ENCODE measurements at regions of chr14 and their contacts with region 1.

Region 1: DNA sequence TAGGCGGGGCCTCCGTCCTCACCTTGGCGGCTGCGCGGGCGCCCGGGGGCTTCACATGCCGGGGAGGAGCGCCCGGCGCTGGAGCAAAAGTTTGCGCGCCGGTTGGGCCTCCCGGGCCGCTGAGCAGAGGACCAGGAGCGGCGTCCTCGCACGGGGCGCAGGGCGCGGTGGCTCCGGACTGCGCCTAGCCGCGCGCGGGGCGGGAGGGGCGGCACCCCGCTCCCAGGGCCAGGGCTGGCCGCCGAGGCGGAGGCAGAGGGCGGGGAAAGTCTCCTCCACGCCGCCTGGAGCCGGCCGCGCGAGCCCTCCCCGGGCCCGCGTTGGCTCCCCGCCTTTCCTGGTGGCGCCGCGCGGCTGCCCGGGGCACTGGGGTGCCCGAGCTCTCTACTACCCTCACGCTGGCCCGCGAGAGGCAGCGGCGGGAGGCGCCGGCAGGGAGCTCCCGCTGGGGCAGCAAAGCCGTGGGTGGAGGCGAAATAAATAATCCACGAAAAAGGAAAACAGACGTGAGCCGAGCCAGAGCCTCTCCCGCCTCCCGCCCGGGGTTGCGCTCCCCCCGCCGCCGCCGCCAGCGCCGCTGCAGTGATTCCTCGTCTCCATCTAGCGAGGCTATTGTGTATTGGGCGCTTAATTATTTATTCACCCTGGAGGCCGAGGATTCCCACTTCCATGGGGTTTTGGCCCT is 400 bp upstream of the PRIMA1 start:
- DNase-seq: peak in 1 of 2 donors; percentile 88
- H3K4me3 ChIP-seq: peak overlapping the region; percentile 28
- CTCF ChIP-seq: no peak
- POLR2A ChIP-seq: no peak

Region 2: DNA sequence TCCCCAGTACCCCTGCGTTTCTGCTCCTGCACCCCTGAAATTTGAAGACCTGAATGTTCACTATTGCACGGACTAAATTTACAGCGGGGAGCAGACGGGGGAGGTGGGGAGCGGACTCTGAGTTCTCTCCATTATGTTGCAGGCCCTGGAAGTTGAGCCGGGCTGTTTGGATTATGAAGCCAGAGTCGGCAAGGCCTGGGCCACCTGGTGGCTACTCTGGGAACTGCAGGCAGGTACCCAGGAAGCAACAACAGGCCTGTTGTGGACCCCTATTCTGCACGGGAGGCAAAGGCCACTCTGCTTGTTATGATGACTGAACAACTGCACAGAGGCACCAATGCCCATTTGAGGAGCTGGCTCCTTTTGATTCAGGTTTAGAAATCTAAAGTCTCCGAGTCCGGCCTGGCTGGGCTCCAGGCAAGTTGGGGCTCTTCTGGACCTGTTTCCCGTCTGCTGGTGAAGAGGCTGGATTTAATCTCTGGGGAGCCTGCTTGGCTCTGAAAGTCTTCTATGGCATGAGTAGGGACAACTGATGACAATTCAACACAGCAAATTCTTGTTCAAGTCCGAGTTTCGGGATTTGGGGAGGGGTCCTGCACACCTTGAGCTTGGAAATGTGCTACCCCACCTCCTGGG is 104.4 kb after region 1 on chr14:
- intact Hi-C with region 1: loop called (anchors 5 kb)
- DNase-seq: peak; percentile 60 to 94
- H3K4me3 ChIP-seq: no peak overlapping the region
- CTCF ChIP-seq: peak in 1 of 3 donors; percentile 91
- POLR2A ChIP-seq: no peak